Naive thymus-derived CD8-positive, alpha-beta T cell (primary cell): ENCODE measurements at regions of chr1 and their contacts with region 1.

Region 1: DNA sequence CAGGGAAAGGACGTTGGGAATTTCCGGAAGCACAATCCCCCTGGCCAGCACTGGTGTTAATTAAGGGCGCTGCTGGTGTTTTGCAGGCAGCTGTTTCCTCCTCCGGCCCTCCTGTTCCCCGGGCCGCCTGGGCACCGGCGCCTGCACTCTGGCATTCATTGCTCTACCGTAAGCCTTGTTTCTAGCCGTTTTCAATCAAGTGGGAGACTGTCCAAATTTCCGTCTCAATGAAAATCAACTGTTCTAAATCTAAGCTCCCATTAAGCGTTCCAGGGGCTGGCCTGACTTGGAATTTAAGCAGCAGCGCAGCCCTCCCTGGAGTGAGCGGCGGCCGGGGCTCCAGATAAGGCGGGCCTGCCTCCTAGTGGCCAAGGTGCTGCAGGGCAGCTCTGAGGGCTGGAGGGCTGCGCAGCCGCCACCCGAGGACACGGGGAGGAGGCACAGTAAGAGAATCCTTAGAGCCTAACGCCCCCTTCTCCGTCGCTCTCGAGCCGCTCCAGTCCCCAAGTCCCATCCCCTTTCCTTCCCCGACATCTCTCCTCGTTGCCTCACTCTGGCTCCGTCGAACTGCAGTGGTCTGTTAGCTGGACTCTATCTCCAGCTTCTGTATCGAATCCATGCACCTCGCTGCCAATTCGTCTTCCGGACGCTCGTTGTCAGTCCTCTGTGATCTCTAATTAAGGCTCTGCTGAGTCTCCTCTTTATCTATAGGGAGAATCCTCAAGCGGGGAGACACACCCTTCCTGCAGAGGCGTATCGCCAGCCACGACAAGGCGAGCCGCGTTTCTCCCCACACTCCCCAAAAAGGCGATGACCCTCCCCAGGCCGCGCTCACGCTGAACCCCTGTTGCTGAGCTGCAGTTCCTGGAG is 57.8 kb upstream of the LRRC8D start:
- DNase-seq: peak; percentile 74 to 93 (median 86)
- ATAC-seq: peak; percentile 98 to 100
- H3K4me3 Mint-ChIP-seq: peak overlapping the region; percentile 78 to 99 (median 92)
- H3K27ac Mint-ChIP-seq: peak overlapping the region; percentile 80 to 97 (median 92)
- H3K4me1 Mint-ChIP-seq: peaks cover 24 to 54% (median 50%) of the 10 kb centered on the region in 4 donors
- H3K27me3 Mint-ChIP-seq: no peaks in the 10 kb centered on the region

Region 2: GRCh38 chr1:89581859-89582258 is 181.2 kb before region 1 on chr1:
- POLR2A ChIA-PET with region 1: interaction called, 16 read pairs
- DNase-seq: no peak
- ATAC-seq: no peak
- H3K4me3 Mint-ChIP-seq: no peak overlapping the region
- H3K27ac Mint-ChIP-seq: peak overlapping the region in 4 of 10 donors; percentile 7 to 58 (median 46)
- H3K4me1 Mint-ChIP-seq: peaks cover 3 to 16% (median 9%) of the 10 kb centered on the region in 4 donors
- H3K27me3 Mint-ChIP-seq: no peaks in the 10 kb centered on the region

Region 3: GRCh38 chr1:89605692-89606091 is 157.3 kb before region 1 on chr1:
- POLR2A ChIA-PET with region 1: interaction called, 60 read pairs
- DNase-seq: no peak
- ATAC-seq: no peak
- H3K4me3 Mint-ChIP-seq: peak overlapping the region in 9 of 10 donors; percentile 1 to 91 (median 69)
- H3K27ac Mint-ChIP-seq: peak overlapping the region; percentile 94 to 100 (median 99)
- H3K4me1 Mint-ChIP-seq: peaks cover 38 to 96% (median 94%) of the 10 kb centered on the region in 4 donors
- H3K27me3 Mint-ChIP-seq: no peaks in the 10 kb centered on the region

Region 4: GRCh38 chr1:89622895-89623294 is 140.1 kb before region 1 on chr1:
- POLR2A ChIA-PET with region 1: interaction called, 12 read pairs
- DNase-seq: peak in 3 of 10 donors; percentile 18 to 46 (median 36)
- ATAC-seq: peak; percentile 70 to 74
- H3K4me3 Mint-ChIP-seq: peak overlapping the region in 1 of 10 donors; percentile 20
- H3K27ac Mint-ChIP-seq: peak overlapping the region in 5 of 10 donors; percentile 17 to 74 (median 47)
- H3K4me1 Mint-ChIP-seq: peaks cover 17 to 62% (median 55%) of the 10 kb centered on the region in 4 donors
- H3K27me3 Mint-ChIP-seq: no peaks in the 10 kb centered on the region

Region 5: DNA sequence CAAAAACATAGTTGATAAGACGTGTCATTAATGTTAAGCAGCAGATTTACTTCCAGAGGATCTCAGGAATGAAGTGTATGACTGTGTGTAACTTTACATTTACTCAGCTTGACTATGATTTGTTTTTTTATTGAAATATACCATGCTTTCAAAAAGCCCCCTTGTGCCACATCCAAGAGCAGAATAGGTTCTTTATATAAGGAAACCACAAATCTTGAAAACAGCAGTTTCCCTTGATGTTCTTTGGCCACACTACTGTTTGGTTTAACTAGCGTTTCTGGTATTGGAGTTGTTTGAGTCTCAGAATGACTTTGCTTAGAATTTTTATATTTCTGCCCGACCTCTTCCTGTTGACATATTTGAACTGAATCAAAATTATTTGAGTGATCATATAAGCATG is 105.1 kb before region 1 on chr1:
- POLR2A ChIA-PET with region 1: interaction called, 27 read pairs
- DNase-seq: peak in 8 of 10 donors; percentile 27 to 85 (median 64)
- ATAC-seq: peak; percentile 85 to 93
- H3K4me3 Mint-ChIP-seq: peak overlapping the region; percentile 22 to 79 (median 56)
- H3K27ac Mint-ChIP-seq: peak overlapping the region; percentile 74 to 96 (median 92)
- H3K4me1 Mint-ChIP-seq: peaks cover 44 to 94% (median 85%) of the 10 kb centered on the region in 4 donors
- H3K27me3 Mint-ChIP-seq: no peaks in the 10 kb centered on the region

Region 6: DNA sequence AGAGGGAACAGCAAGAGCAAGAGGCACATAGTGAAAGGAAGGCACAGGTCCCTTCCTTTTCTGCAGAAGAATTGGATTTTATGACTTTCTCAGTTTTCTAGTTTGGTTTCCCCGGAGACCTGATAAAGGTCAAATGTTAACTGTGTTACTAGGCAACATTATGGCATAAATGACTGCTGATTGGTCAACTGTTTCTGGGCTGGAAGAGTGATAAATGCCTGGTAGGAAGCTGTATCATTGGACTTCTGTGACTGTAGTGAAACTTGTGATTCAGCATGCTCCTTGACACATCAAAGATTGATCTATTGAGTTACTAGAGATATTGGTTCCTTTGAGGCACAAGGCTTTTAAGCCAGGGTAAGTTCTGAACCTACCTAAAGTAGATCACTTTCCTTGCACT is 74.4 kb before region 1 on chr1:
- POLR2A ChIA-PET with region 1: no interaction called
- DNase-seq: no peak
- ATAC-seq: no peak
- H3K4me3 Mint-ChIP-seq: no peak overlapping the region
- H3K27ac Mint-ChIP-seq: peak overlapping the region in 9 of 10 donors; percentile 29 to 94 (median 74)
- H3K4me1 Mint-ChIP-seq: peaks cover 45 to 75% (median 70%) of the 10 kb centered on the region in 4 donors
- H3K27me3 Mint-ChIP-seq: no peaks in the 10 kb centered on the region

Region 7: GRCh38 chr1:89781494-89782126 is 18.6 kb after region 1 on chr1:
- POLR2A ChIA-PET with region 1: no interaction called
- DNase-seq: peak; percentile 42 to 85 (median 77)
- ATAC-seq: peak; percentile 81 to 89
- H3K4me3 Mint-ChIP-seq: peak overlapping the region; percentile 34 to 77 (median 66)
- H3K27ac Mint-ChIP-seq: peak overlapping the region in 8 of 10 donors; percentile 1 to 86 (median 44)
- H3K4me1 Mint-ChIP-seq: peaks cover 16 to 24% (median 19%) of the 10 kb centered on the region in 4 donors
- H3K27me3 Mint-ChIP-seq: peaks cover 0 to 12% (median 2%) of the 10 kb centered on the region in 5 donors